ENCODE measurements at regions of chr2 and their contacts with region 1.

Region 1: DNA sequence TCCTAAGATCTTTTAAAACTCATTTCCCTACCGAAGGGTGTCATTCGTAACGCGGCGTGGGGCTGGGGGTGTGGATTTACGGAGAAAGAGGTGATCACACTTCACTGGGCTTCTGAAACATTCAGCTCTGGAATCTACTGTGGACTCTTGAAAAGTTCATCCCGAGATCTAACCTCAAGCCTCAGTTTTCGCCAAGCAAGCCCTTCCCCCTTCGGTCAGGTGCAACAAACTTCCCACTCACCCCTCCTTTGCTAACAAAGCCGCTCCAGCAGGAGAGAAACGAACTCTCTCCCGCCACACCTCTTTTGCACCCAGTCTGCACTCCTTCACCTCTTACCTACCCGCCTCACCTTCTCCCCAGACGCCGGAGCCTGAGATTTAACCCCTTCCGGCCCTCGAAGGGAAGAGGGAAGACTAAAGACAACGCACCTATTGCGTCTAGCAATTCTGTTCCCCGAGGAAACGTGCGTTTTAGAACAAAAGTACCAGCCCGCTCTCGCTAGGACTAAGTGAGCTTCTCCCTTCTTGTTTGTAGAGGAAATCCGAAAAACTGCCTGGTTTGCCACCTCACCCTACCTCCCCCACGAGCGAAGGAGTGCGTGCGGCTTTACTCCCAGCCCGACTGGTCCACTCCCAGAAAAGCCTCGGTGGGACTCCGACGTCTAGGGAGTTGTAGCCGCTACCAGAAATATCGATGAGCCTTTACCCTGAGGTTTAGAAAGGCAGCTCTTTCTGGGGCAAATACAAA is 538 bp upstream of the PEX13 start:
- ATAC-seq: peak; percentile 65 to 88 (median 82)
- H3K4me3 ChIP-seq: peak overlapping the region; percentile 90 to 100 (median 94)
- H3K27ac ChIP-seq: peak overlapping the region; percentile 87 to 94
- H3K4me1 ChIP-seq: peaks cover 0 to 10% of the 10 kb centered on the region in 2 donors

Region 2: DNA sequence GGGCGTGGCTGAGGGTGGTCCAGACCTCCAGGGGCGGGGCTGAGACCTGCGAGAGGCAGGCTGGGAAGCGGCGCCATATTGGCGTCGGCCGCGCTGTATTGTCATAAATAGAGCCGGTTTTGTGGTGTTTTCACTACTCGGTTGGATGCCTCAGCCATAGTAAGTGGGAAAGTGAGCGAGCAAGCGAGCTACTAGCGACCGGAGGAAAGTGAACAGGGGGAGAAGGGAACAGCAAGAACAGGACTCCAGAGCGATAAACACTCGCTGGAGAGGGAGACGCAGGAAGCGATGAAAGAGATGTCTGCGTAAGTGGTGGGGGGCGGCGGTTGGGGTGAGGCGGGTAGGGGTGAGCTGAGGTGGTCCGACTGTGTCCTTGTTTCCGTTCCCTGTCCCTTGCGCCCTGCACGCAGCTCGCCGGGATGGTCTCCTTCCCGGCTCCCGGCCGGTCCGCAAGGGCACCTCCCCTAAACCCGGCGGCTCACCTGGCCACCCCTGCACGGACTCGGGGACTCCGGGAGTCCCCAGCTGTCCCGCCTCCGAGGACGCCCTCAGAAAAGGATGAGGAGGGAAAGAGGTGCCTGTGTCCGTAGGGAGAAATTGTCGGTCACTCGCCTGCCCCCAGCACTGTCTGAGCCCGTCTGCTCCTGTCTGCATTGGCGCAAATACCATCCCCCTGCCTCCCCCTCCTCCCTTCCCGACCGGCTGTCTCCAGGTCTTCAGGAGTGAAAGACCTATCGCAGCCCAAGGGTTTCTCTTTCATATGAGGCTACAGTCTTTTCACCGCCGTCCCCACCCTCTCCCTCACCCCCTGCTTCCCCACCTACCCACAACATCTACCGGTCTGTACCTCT is 260.6 kb before region 1 on chr2 and contains the start of gene PAPOLG:
- in situ Hi-C with region 1: loop called in 1 of 9 experiments (anchors 25 kb)
- ATAC-seq: peak; percentile 88 to 94 (median 92)
- H3K4me3 ChIP-seq: peak within 1 kb of the TSS; percentile 76 to 92 (median 81)
- H3K27ac ChIP-seq: peak within 1 kb of the TSS; percentile 90 to 92
- H3K4me1 ChIP-seq: peaks cover 4 to 12% of the 10 kb centered on the region in 2 donors
- total RNA-seq, gene PAPOLG: 7.3 to 23.9 (median 20.2) TPM

Region 3: DNA sequence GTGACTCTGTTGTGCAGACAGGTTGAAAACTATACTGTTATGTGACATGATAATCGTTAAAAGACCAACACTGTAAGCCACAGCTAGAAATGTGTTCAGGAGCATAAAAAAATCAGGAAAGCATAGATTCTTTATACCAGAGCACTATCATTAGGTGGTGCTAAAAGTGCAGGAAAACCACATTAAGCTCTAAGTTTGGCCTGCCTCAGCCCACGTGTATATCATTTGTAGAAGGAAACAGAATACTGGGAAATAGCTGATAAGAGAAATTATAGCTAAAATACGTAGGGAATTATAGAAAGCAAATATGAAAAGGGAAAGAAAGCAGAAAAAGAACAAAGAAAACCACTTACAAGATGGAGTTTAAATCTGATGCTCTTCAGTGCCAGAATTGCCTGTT is 118.5 kb after region 1 on chr2:
- in situ Hi-C with region 1: no loop called
- ATAC-seq: peak in 5 of 8 experiments; percentile 45 to 59 (median 55)
- H3K4me3 ChIP-seq: no peak overlapping the region
- H3K27ac ChIP-seq: no peak overlapping the region
- H3K4me1 ChIP-seq: no peaks in the 10 kb centered on the region

Region 4: GRCh38 chr2:61193670-61194571 is 176.9 kb after region 1 on chr2:
- in situ Hi-C with region 1: no loop called
- ATAC-seq: peak in 3 of 8 experiments; percentile 42 to 79 (median 71)
- H3K4me3 ChIP-seq: no peak overlapping the region
- H3K27ac ChIP-seq: no peak overlapping the region
- H3K4me1 ChIP-seq: no peaks in the 10 kb centered on the region